Heart right ventricle (tissue), 16 donors: ENCODE measurements at regions of chr19 and their contacts with region 1.

Region 1: GRCh38 chr19:44304659-44305193 is at the start of gene ZNF235:
- DNase-seq: peak; percentile 85 to 92
- ATAC-seq: peak; percentile 99 to 100 (median 100)
- H3K4me3 ChIP-seq: peak within 1 kb of the TSS; percentile 37 to 95 (median 80)
- H3K27ac ChIP-seq: peak within 1 kb of the TSS; percentile 4 to 86 (median 80)
- H3K4me1 ChIP-seq: peaks cover 3 to 16% (median 12%) of the 10 kb centered on the region in 9 donors
- H3K27me3 ChIP-seq: no peaks in the 10 kb centered on the region
- CTCF ChIP-seq: no peak
- total RNA-seq, gene ZNF235: 2.4 to 5.1 (median 3.6) TPM

Region 2: GRCh38 chr19:44212250-44212865 is 92.4 kb before region 1 on chr19 and contains the start of gene ZNF227:
- intact Hi-C with region 1: loop called in 3 of 10 experiments (anchors 2 to 10 kb)
- DNase-seq: peak; percentile 89 to 93
- ATAC-seq: peak; percentile 97 to 98 (median 98)
- H3K4me3 ChIP-seq: peak within 1 kb of the TSS; percentile 55 to 91 (median 81)
- H3K27ac ChIP-seq: peak within 1 kb of the TSS; percentile 63 to 92 (median 86)
- H3K4me1 ChIP-seq: peaks cover 0 to 33% (median 20%) of the 10 kb centered on the region in 9 donors
- H3K27me3 ChIP-seq: no peaks in the 10 kb centered on the region
- CTCF ChIP-seq: no peak
- total RNA-seq, gene ZNF227: 10.6 to 18.1 (median 12.6) TPM

Region 3: DNA sequence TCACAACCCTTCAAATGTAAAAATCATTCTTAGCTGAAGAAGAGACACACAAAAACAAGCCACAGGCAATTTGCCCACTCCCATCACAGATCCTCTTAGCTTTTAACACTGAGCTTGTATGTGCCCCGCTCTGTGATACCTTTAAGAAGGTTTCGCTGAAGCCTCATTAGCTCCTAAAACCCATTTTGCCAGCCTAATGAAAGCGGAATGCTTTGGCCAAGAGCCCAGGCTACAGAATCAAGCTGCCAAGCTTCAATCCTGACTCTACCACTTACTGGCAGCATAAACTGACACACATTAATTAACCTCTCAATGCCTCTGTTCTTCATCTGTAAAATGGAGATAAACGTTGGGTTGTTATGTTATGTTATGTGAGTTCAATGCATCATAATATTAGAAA is 41.2 kb after region 1 on chr19:
- intact Hi-C with region 1: loop called in 4 of 10 experiments (anchors 5 to 10 kb)
- DNase-seq: peak in 1 of 2 donors; percentile 12
- ATAC-seq: peak in 3 of 8 donors; percentile 39 to 78 (median 49)
- H3K4me3 ChIP-seq: no peak overlapping the region
- H3K27ac ChIP-seq: no peak overlapping the region
- H3K4me1 ChIP-seq: peaks cover 0 to 17% (median 0%) of the 10 kb centered on the region in 9 donors
- H3K27me3 ChIP-seq: no peaks in the 10 kb centered on the region
- CTCF ChIP-seq: no peak

Region 4: DNA sequence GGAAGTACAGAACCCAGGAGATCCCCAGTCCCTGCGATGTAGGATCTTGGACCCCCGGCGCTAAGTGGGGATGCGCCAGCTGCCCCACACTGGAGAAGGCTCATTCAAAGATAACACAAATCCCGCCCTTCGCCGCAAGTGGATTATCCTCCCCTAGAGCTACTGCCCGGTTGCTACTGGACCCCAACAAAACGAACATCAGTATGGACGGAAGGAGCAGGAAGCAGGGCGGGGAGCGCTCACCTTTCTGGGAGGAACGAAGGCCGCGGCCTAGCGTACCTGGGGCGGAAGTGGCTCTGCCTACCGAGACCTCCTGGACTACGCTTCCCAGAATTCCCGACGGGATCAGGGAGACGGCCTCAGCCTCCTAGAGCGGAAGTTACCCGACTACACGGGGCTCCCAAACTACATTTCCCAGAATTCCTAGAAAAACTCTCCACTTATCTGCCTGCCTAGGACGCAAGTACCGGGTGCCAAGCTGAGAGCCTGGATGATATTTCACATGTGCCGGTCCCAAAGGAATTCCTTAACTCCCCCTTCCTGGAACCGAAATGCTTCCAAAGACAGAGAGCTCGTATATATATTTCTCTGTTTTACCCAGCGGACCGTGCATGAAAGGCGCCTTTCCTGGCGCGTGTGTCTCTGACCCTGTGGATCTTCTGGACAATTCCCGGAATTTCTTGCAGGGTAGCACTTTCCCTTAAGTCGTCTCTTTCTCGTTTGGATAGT is 51.8 kb after region 1 on chr19 and contains the start of gene ZNF112:
- intact Hi-C with region 1: loop called in 3 of 10 experiments (anchors 2 to 10 kb)
- DNase-seq: peak; percentile 78 to 93
- ATAC-seq: peak; percentile 99 to 100 (median 100)
- H3K4me3 ChIP-seq: peak within 1 kb of the TSS; percentile 29 to 81 (median 60)
- H3K27ac ChIP-seq: peak within 1 kb of the TSS in 9 of 10 donors; percentile 11 to 76 (median 59)
- H3K4me1 ChIP-seq: peaks cover 0 to 14% (median 6%) of the 10 kb centered on the region in 9 donors
- H3K27me3 ChIP-seq: peaks cover 0 to 3% (median 0%) of the 10 kb centered on the region in 7 donors
- CTCF ChIP-seq: no peak
- total RNA-seq, gene ZNF112: 2.6 to 6.4 (median 5.0) TPM

Region 5: GRCh38 chr19:44455100-44455499 is 150.4 kb after region 1 on chr19:
- intact Hi-C with region 1: no loop called
- DNase-seq: no peak
- ATAC-seq: no peak
- H3K4me3 ChIP-seq: no peak overlapping the region
- H3K27ac ChIP-seq: no peak overlapping the region
- H3K4me1 ChIP-seq: no peaks in the 10 kb centered on the region
- H3K27me3 ChIP-seq: no peaks in the 10 kb centered on the region
- CTCF ChIP-seq: no peak